GM13977 (cell line): ENCODE measurements at regions of chr20 and their contacts with region 1.

Region 1: GRCh38 chr20:58481481-58482021 is 33.6 kb downstream of the APCDD1L start:
- DNase-seq: peak; percentile 80
- CTCF ChIP-seq: peak; percentile 59

Region 2: DNA sequence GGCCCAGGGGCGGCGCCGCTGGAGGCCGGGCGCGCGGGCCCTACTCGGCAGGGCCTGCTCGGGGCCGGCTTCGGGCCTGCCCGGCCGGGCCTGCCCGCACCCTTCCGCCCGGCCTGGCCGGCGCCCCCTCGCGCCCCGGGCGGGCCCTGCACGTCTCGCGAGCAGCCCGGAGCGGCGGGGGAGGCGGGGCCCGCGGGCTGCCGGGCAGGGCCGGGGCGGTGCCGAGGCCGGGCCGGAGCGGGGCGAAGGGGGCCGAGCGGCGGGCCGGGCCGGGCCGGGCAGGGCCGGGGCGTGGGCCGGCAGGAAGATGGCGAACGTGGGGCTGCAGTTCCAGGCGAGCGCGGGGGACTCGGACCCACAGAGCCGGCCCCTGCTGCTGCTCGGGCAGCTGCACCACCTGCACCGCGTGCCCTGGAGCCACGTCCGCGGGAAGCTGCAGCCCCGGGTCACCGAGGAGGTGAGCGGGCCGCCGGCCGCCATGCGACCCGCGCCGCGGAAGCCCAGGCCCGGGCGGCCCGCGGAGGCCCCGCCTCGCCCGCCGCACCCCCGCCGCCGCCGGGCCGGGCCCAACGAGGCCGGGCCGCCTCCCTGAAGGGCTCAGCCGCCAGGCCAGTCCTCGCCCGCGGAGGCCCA is 211.2 kb after region 1 on chr20 and contains the start of gene NPEPL1:
- in situ Hi-C with region 1: no loop called
- DNase-seq: peak; percentile 97
- CTCF ChIP-seq: peak; percentile 78

Region 3: GRCh38 chr20:58839474-58839874 is 357.9 kb after region 1 on chr20:
- in situ Hi-C with region 1: loop called (anchors 25 kb)
- DNase-seq: peak; percentile 67
- CTCF ChIP-seq: peak; percentile 51

Region 4: GRCh38 chr20:58982406-58983114 is 501.0 kb after region 1 on chr20:
- in situ Hi-C with region 1: no loop called
- DNase-seq: no peak
- CTCF ChIP-seq: no peak